Activated CD8-positive, alpha-beta T cell treated with anti-CD3 and anti-CD28 coated beads for 36 hours (primary cell): ENCODE measurements at regions of chr10 and their contacts with region 1.

Region 1: GRCh38 chr10:31745612-31746376 is 182.8 kb downstream of the ARHGAP12 start:
- DNase-seq: peak; percentile 74
- ATAC-seq: peak; percentile 99
- H3K4me3 Mint-ChIP-seq: no peak overlapping the region
- H3K27ac Mint-ChIP-seq: peak overlapping the region; percentile 89
- H3K4me1 Mint-ChIP-seq: peaks cover 32% of the 10 kb centered on the region
- H3K27me3 Mint-ChIP-seq: no peaks in the 10 kb centered on the region
- CTCF ChIP-seq: no peak

Region 2: GRCh38 chr10:31707093-31708039 is 38.4 kb before region 1 on chr10:
- CTCF ChIA-PET with region 1: no interaction called
- POLR2A ChIA-PET with region 1: no interaction called
- intact Hi-C with region 1: loop called (anchors 5 kb)
- DNase-seq: peak; percentile 77
- ATAC-seq: peak; percentile 94
- H3K4me3 Mint-ChIP-seq: peak overlapping the region; percentile 18
- H3K27ac Mint-ChIP-seq: peak overlapping the region; percentile 84
- H3K4me1 Mint-ChIP-seq: peaks cover 19% of the 10 kb centered on the region
- H3K27me3 Mint-ChIP-seq: no peaks in the 10 kb centered on the region
- CTCF ChIP-seq: no peak

Region 3: GRCh38 chr10:31759799-31760626 is 14.2 kb after region 1 on chr10:
- CTCF ChIA-PET with region 1: interaction called, 7 read pairs
- POLR2A ChIA-PET with region 1: interaction called, 16 read pairs
- intact Hi-C with region 1: no loop called
- DNase-seq: peak; percentile 96
- ATAC-seq: peak; percentile 94
- H3K4me3 Mint-ChIP-seq: peak overlapping the region; percentile 90
- H3K27ac Mint-ChIP-seq: peak overlapping the region; percentile 90
- H3K4me1 Mint-ChIP-seq: peaks cover 17% of the 10 kb centered on the region
- H3K27me3 Mint-ChIP-seq: no peaks in the 10 kb centered on the region
- CTCF ChIP-seq: no peak

Region 4: GRCh38 chr10:31770307-31770902 is 24.6 kb after region 1 on chr10:
- CTCF ChIA-PET with region 1: interaction called, 12 read pairs
- POLR2A ChIA-PET with region 1: interaction called, 3 read pairs
- intact Hi-C with region 1: no loop called
- DNase-seq: peak; percentile 73
- ATAC-seq: peak; percentile 87
- H3K4me3 Mint-ChIP-seq: no peak overlapping the region
- H3K27ac Mint-ChIP-seq: no peak overlapping the region
- H3K4me1 Mint-ChIP-seq: peaks cover 5% of the 10 kb centered on the region
- H3K27me3 Mint-ChIP-seq: no peaks in the 10 kb centered on the region
- CTCF ChIP-seq: peak; percentile 87